Gastrocnemius medialis (tissue), 4 donors: ENCODE measurements at regions of chr4 and their contacts with region 1.

Region 1: GRCh38 chr4:16916719-16917337 is 18.4 kb upstream of the LDB2 start:
- DNase-seq: no peak
- ATAC-seq: no peak
- H3K4me3 ChIP-seq: no peak overlapping the region
- H3K27ac ChIP-seq: no peak overlapping the region
- H3K4me1 ChIP-seq: no peaks in the 10 kb centered on the region
- H3K27me3 ChIP-seq: no peaks in the 10 kb centered on the region
- CTCF ChIP-seq: peak; percentile 4 to 61 (median 43)
- POLR2A ChIP-seq: no peak

Region 2: GRCh38 chr4:16858275-16858752 is 58.5 kb before region 1 on chr4:
- in situ Hi-C with region 1: no loop called
- intact Hi-C with region 1: no loop called
- DNase-seq: no peak
- ATAC-seq: peak; percentile 61 to 80
- H3K4me3 ChIP-seq: no peak overlapping the region
- H3K27ac ChIP-seq: peak overlapping the region; percentile 9 to 73 (median 68)
- H3K4me1 ChIP-seq: no peaks in the 10 kb centered on the region
- H3K27me3 ChIP-seq: no peaks in the 10 kb centered on the region
- CTCF ChIP-seq: no peak
- POLR2A ChIP-seq: no peak

Region 3: DNA sequence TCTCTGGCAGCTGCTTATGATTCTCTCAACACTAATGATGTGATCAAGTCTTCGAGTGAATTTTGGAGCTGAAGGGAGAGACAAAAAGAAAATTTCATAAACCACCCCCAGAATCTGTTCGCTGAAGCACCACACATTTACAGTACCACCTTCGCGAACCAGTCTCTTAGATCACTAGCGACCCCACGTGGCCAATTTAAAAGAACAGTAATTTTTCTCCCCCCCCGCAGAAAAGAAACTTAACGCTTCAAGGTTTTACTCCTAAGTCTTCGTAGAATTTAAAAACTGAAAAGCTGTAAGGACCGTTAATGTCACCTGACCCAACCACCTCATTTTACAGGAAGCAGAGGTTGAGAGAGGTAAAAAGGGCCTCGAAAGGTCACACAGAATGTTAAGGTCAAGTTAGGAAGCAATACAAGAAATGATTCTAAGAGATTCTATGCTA is 407.6 kb after region 1 on chr4:
- in situ Hi-C with region 1: loop called in 1 of 4 experiments (anchors 10 kb)
- intact Hi-C with region 1: no loop called
- DNase-seq: no peak
- ATAC-seq: no peak
- H3K4me3 ChIP-seq: no peak overlapping the region
- H3K27ac ChIP-seq: no peak overlapping the region
- H3K4me1 ChIP-seq: peaks cover 0 to 4% of the 10 kb centered on the region in 2 donors
- H3K27me3 ChIP-seq: no peaks in the 10 kb centered on the region
- CTCF ChIP-seq: peak in 4 of 5 experiments; percentile 20 to 57 (median 46)
- POLR2A ChIP-seq: no peak